Activated CD4-positive, alpha-beta T cell treated with anti-CD3 and anti-CD28 coated beads, Interleukin-2, amount 10 ng/mL, durations not matched to agents 24 days and 14 days (primary cell): ENCODE measurements at regions of chr6 and their contacts with region 1.

Region 1: DNA sequence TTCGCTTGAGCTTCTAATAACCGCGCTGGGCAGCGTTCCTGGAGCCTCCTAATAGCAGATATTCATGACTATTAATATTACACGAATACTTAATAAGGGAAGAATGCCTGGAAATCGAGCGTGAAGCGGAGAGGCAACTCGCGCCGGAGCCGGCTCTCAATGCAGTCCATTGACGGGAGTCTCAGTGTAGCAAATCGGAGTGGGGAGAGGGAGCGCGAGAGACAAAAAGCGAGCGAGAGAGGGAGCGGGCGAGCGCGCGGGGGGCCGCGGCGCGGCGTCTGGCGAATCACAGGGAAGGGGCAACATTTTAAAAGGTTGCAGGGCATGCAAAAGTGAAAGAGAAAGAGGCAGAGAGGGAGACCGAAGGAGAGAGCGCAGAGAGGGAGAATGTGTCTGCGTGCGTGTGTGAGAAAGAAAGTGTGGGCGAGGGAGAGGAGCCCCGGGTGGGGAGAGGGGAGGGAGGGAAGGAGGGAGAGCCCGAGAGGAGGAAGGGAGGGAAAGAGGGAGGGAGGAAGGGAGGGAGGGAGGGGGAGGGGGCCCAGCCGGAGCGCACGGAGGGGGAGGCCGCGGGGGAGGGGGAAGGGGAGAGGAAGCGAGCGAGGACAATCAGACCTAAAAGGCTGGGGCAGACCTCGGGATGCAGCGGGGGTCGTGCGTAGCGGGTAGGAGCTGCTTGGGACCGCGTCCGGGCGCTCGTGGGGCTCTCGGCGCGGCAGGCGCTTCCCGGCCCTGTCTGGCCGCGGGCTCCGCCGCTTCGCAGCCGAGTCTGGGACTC is 2.7 kb downstream of the TFAP2A start:
- DNase-seq: peak; percentile 86
- H3K4me3 Mint-ChIP-seq: peak overlapping the region; percentile 92
- H3K27ac Mint-ChIP-seq: peak overlapping the region; percentile 76
- H3K4me1 Mint-ChIP-seq: peaks cover 31% of the 10 kb centered on the region
- H3K27me3 Mint-ChIP-seq: peaks cover 89% of the 10 kb centered on the region

Region 2: DNA sequence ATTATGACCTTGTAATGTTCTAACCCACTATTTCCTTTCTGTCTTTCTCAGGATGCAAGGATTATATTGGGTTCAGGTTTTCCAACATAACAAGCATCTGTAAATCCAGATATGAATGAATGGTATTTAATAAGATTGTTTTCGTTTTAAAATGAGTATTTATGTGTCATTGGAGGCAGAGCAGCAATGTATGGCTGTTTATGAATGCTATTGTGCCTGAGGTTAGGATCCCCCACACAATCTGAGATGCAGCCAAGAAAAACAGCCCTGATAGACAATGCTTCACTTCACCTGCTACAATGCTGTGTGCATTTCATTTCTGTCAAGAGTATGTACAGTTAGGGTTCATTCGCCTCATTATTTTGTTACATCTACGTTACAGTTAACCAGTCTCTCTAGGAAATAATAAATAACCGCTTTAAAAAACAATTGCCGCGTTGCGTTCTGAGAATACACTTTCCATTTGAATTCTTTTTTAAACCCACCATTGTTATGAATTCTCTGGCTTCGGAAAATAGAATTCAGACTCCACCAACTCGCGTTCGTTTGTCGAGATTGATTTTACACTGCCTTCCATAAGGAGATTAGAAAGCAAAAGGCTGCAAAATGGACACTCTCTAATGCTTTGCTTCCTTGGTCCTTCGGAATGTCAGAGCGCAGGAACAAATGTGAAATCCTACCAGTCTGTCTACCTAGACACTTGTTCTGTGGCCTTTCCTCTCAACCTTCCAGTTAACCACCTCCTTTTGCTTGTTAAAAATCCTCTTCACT is 16.8 kb before region 1 on chr6:
- intact Hi-C with region 1: loop called (anchors 2 kb)
- DNase-seq: no peak
- H3K4me3 Mint-ChIP-seq: no peak overlapping the region
- H3K27ac Mint-ChIP-seq: no peak overlapping the region
- H3K4me1 Mint-ChIP-seq: no peaks in the 10 kb centered on the region
- H3K27me3 Mint-ChIP-seq: peaks cover 87% of the 10 kb centered on the region

Region 3: DNA sequence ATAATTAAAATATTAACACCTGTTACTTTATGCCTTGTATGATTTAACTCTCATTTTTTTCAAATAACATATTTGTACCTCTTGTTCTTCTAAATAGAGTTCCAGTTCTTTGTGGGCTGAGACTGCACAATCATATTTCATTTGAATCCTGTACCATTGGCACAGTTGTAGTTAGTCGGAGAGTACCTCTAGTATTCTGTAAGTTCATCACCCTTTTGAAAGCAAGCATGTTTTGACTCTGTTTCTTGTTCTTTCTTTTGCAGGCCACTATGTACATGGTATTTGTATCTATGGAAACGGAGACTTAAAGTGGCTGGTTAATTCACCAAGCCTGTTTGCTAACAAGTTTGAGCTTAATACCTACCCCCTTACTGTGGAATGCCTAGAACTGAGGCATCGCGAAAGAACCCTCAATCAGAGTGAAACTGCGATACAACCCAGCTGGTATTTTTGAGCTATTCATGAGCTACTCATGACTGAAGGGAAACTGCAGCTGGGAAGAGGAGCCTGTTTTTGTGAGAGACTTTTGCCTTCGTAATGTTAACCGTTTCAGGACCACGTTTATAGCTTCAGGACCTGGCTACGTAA is 214.1 kb after region 1 on chr6:
- intact Hi-C with region 1: no loop called
- DNase-seq: no peak
- H3K4me3 Mint-ChIP-seq: no peak overlapping the region
- H3K27ac Mint-ChIP-seq: no peak overlapping the region
- H3K4me1 Mint-ChIP-seq: no peaks in the 10 kb centered on the region
- H3K27me3 Mint-ChIP-seq: no peaks in the 10 kb centered on the region